ENCODE measurements at regions of chr4 and their contacts with region 1.

Region 1: DNA sequence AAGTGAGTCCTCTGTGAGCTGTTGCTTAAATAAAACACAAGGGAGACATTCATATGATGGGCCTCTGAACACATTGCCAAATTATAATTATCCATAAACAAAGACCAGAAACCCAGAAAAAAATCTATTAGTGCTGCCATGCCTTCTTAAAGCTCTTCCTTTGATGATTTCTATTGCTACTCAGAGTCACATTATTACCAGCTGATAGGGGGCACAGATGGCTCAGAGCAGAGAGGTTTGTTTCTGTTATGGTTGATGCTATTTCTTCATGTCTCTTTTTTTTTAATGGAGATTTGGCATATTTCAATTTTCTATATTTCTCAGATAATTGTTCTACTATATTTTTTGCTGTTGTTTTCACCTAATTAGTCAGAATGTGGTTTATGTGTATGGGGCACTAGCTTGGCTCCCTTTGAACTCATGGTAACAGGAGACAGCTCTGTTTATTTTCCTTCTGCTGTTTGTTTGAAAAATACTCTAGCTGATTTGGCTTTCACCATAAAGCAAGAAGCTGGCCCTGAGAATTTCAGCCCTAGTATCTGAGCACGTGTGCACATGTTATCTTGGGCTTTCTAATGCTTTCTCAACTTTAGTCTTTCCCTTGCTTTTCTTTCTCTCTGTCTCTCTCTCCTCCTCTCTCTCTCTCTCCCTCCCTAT is 568.8 kb downstream of the PPARGC1A start:
- DNase-seq: no peak
- CTCF ChIP-seq: no peak

Region 2: DNA sequence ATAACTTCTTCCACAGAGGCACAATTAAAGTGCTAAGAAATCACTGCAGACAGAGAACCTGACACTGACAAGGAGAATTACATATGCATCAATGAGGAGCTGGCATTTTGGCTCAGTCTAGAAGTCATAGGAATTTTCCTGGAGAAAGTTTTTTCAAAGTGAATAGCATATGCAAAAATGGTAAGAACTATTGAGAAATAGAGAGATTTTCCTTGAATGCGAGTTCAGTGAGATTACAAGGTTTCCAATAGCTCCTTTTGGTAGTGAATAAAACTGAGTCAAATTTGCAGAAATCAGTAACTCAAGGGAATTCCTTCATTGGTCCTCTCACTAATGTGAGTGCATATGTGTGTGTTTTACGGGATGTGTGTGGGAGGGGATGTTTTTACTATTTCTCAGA is 11.3 kb after region 1 on chr4:
- CTCF ChIA-PET with region 1: interaction called, 13 read pairs
- POLR2A ChIA-PET with region 1: no interaction called
- DNase-seq: no peak
- CTCF ChIP-seq: no peak

Region 3: GRCh38 chr4:23368081-23368697 is 47.1 kb after region 1 on chr4:
- CTCF ChIA-PET with region 1: no interaction called
- POLR2A ChIA-PET with region 1: no interaction called
- DNase-seq: no peak
- CTCF ChIP-seq: no peak

Measured in GM10248 (cell line).